Right cardiac atrium (tissue), 5 donors: ENCODE measurements at regions of chr1 and their contacts with region 1.

Region 1: DNA sequence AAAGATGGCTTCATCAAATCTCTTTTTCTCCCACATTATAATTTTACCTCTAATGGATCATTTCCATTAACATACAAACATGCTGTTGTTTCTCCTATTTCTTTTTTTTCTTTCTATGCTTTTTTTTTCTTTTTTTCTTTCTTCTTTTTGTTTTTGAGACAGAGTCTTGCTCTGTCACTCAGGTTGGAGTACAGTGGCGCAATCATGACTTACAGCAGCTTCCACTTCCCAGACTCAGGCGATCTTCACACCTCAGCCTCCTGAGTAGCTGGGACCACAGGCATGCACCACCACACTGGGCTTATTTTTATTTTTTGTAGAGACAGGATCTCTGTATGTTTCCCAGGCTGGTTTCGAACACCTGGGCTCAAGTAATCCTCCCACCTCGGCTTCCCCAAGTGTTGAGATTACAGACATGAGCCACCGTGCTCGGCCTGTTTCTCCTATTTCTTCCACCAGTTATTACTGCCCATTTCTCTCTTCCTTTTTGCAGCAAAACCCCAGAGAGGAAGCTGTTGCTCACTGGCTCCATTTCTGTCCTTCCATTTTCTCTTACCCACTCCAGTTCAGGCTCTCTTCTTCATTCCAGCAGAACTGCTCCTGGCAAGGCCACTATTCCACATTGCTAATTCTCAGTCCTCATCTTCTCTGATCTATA is 32.1 kb upstream of the OPRD1 start:
- DNase-seq: no peak
- ATAC-seq: no peak
- H3K4me3 ChIP-seq: no peak overlapping the region
- H3K27ac ChIP-seq: no peak overlapping the region
- H3K4me1 ChIP-seq: no peaks in the 10 kb centered on the region
- H3K27me3 ChIP-seq: no peaks in the 10 kb centered on the region

Region 2: DNA sequence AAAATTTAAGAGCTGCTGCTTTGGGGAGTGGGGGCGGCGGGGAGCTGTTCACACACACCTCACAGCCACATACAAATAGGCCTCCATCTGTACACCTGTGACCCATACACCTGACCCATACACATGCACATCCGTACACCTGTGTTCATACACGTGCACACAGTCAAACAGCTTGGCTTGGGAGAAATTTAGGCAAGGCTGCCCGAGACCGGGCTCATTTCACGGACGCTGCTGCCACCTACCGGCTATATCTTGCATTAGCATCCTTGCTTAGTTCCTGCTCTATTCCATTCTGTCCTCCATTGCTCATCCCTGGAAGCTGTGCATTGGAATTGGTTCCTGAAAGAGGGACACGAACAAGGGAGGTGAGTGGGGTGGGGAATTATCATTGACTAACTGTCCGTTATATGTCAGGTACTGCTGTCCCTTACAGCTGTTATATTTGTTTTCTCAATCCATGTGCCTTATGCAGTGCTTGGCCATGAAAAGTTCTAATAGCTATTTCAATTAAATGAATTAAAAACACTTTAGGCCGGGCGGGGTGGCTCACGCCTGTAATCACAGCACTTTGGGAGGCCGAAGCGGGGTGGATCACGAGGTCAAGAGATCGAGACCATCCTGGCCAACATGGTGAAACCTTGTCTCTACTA is 97.4 kb after region 1 on chr1:
- intact Hi-C with region 1: loop called (anchors 1 to 5 kb)
- DNase-seq: peak; percentile 71 to 84 (median 81)
- ATAC-seq: peak; percentile 78 to 83
- H3K4me3 ChIP-seq: no peak overlapping the region
- H3K27ac ChIP-seq: no peak overlapping the region
- H3K4me1 ChIP-seq: no peaks in the 10 kb centered on the region
- H3K27me3 ChIP-seq: no peaks in the 10 kb centered on the region

Region 3: GRCh38 chr1:28913786-28914227 is 133.9 kb after region 1 on chr1:
- intact Hi-C with region 1: no loop called
- DNase-seq: no peak
- ATAC-seq: no peak
- H3K4me3 ChIP-seq: peak overlapping the region; percentile 71
- H3K27ac ChIP-seq: no peak overlapping the region
- H3K4me1 ChIP-seq: peaks cover 4% of the 10 kb centered on the region
- H3K27me3 ChIP-seq: no peaks in the 10 kb centered on the region

Region 4: GRCh38 chr1:29033829-29034466 is 254.1 kb after region 1 on chr1:
- intact Hi-C with region 1: loop called in 2 of 4 experiments (anchors 5 to 10 kb)
- DNase-seq: no peak
- ATAC-seq: peak in 1 of 2 donors; percentile 62
- H3K4me3 ChIP-seq: no peak overlapping the region
- H3K27ac ChIP-seq: no peak overlapping the region
- H3K4me1 ChIP-seq: no peaks in the 10 kb centered on the region
- H3K27me3 ChIP-seq: no peaks in the 10 kb centered on the region

Region 5: GRCh38 chr1:29197585-29197924 is 417.7 kb after region 1 on chr1:
- intact Hi-C with region 1: loop called in 2 of 4 experiments (anchors 10 kb)
- DNase-seq: no peak
- ATAC-seq: no peak
- H3K4me3 ChIP-seq: no peak overlapping the region
- H3K27ac ChIP-seq: no peak overlapping the region
- H3K4me1 ChIP-seq: peaks cover 4% of the 10 kb centered on the region
- H3K27me3 ChIP-seq: no peaks in the 10 kb centered on the region

Region 6: GRCh38 chr1:29202584-29203340 is 422.9 kb after region 1 on chr1:
- intact Hi-C with region 1: loop called in 2 of 4 experiments (anchors 10 kb)
- DNase-seq: peak; percentile 94 to 98 (median 97)
- ATAC-seq: peak; percentile 95 to 97
- H3K4me3 ChIP-seq: no peak overlapping the region
- H3K27ac ChIP-seq: peak overlapping the region; percentile 85
- H3K4me1 ChIP-seq: peaks cover 2% of the 10 kb centered on the region
- H3K27me3 ChIP-seq: no peaks in the 10 kb centered on the region

Region 7: GRCh38 chr1:29341936-29342335 is 562.1 kb after region 1 on chr1:
- intact Hi-C with region 1: no loop called
- DNase-seq: no peak
- ATAC-seq: no peak
- H3K4me3 ChIP-seq: no peak overlapping the region
- H3K27ac ChIP-seq: no peak overlapping the region
- H3K4me1 ChIP-seq: no peaks in the 10 kb centered on the region
- H3K27me3 ChIP-seq: no peaks in the 10 kb centered on the region